ENCODE measurements at regions of chr6 and their contacts with region 1.

Region 1: DNA sequence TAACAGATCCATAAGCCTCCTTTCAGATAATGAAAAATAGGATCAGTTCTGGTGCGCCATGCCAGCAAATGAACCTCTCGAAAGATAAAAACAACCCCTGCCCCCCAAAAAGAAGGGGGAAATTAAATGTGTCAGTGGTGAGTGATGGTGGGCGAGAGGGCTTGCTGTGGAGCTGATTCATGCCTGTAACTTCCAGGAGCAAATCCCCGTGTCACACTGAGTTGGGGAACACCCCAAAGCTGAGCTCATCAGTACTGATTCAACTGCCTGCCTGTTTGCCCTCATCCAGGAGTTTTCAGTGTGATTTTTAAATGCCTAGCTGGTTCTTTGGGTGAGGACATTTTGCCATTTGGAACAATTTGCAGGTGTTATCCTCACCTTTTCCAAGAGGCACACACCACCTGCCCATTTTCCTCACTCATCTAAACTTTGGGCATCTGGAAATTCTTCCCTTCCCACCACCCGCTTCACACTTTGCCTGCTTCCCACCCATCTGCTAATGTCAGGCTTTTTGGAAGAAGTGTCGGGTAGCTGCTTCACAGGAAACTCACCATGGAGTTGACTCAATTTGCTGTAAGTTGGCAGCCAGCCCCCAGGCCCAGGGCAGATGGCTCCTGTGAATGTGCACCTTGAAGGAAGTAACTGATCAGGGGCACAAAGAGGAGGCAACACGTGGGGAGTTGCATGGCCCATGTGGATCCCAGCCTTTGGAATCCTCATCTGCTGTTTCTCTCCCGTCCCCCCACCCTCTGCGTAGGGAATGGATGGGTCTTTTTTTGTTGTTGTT is 87.1 kb downstream of the PPP1R14C start:
- DNase-seq: no peak
- H3K4me3 Mint-ChIP-seq: no peak overlapping the region
- H3K27ac Mint-ChIP-seq: peak overlapping the region; percentile 86
- H3K4me1 Mint-ChIP-seq: peaks cover 16% of the 10 kb centered on the region
- H3K27me3 Mint-ChIP-seq: no peaks in the 10 kb centered on the region
- CTCF ChIP-seq: no peak

Region 2: GRCh38 chr6:149934249-149935156 is 295.5 kb before region 1 on chr6:
- CTCF ChIA-PET with region 1: no interaction called
- POLR2A ChIA-PET with region 1: no interaction called
- intact Hi-C with region 1: no loop called
- DNase-seq: peak; percentile 74
- H3K4me3 Mint-ChIP-seq: no peak overlapping the region
- H3K27ac Mint-ChIP-seq: no peak overlapping the region
- H3K4me1 Mint-ChIP-seq: peaks cover 23% of the 10 kb centered on the region
- H3K27me3 Mint-ChIP-seq: peaks cover 22% of the 10 kb centered on the region
- CTCF ChIP-seq: peak; percentile 67

Region 3: DNA sequence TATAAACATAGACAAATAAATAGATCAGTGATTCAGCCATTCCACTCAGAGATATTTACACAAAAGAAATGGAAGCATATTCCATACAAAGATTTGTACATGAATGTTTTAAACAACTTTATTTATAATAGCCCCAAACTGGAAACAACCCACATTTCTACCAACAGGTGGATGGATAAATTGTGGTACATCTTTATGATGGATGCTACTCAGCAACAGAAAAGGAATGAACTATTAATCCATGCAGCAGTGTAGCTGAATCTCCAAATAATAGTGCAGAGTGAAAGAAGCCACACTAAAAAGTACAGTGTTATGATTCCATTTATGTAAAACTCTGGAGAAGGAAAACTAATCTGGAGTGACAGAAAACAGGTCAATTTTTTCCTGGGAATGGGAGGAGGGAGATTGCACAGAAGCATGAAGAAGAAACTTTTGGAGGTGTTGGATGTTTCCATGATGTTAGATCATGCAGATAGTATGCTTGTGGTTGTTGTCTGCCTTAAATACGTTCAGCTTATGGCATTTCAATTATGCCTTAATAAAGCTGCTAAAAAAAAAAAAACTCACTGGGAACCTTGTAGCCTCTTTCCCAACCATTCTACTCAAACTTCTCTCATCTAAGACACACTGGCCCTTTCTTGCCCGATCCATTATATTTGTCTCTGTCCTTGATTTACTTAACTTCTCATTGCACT is 13.8 kb after region 1 on chr6:
- CTCF ChIA-PET with region 1: interaction called, 3 read pairs
- POLR2A ChIA-PET with region 1: interaction called, 15 read pairs
- intact Hi-C with region 1: no loop called
- DNase-seq: no peak
- H3K4me3 Mint-ChIP-seq: no peak overlapping the region
- H3K27ac Mint-ChIP-seq: no peak overlapping the region
- H3K4me1 Mint-ChIP-seq: peaks cover 22% of the 10 kb centered on the region
- H3K27me3 Mint-ChIP-seq: no peaks in the 10 kb centered on the region
- CTCF ChIP-seq: no peak

Region 4: GRCh38 chr6:150250826-150251225 is 20.9 kb after region 1 on chr6:
- CTCF ChIA-PET with region 1: interaction called, 5 read pairs
- POLR2A ChIA-PET with region 1: interaction called, 15 read pairs
- intact Hi-C with region 1: no loop called
- DNase-seq: peak; percentile 99
- H3K4me3 Mint-ChIP-seq: peak overlapping the region; percentile 46
- H3K27ac Mint-ChIP-seq: peak overlapping the region; percentile 95
- H3K4me1 Mint-ChIP-seq: peaks cover 42% of the 10 kb centered on the region
- H3K27me3 Mint-ChIP-seq: no peaks in the 10 kb centered on the region
- CTCF ChIP-seq: no peak